Activated CD8-positive, alpha-beta T cell treated with anti-CD3 and anti-CD28 coated beads, Interleukin-2, amount 10 ng/mL, durations not matched to agents 7 days and 5 days (primary cell): ENCODE measurements at regions of chr6 and their contacts with region 1.

Region 1: GRCh38 chr6:158220786-158221442 is 52.8 kb downstream of the GTF2H5 start:
- DNase-seq: peak; percentile 82
- ATAC-seq: peak; percentile 94
- H3K4me3 Mint-ChIP-seq: no peak overlapping the region
- H3K27ac Mint-ChIP-seq: no peak overlapping the region
- H3K4me1 Mint-ChIP-seq: peaks cover 6% of the 10 kb centered on the region
- H3K27me3 Mint-ChIP-seq: no peaks in the 10 kb centered on the region

Region 2: GRCh38 chr6:158231551-158232315 is 10.8 kb after region 1 on chr6:
- CTCF ChIA-PET with region 1: interaction called, 14 read pairs
- POLR2A ChIA-PET with region 1: no interaction called
- DNase-seq: peak; percentile 76
- ATAC-seq: peak; percentile 86
- H3K4me3 Mint-ChIP-seq: peak overlapping the region; percentile 87
- H3K27ac Mint-ChIP-seq: peak overlapping the region; percentile 87
- H3K4me1 Mint-ChIP-seq: peaks cover 20% of the 10 kb centered on the region
- H3K27me3 Mint-ChIP-seq: peaks cover 5% of the 10 kb centered on the region

Region 3: DNA sequence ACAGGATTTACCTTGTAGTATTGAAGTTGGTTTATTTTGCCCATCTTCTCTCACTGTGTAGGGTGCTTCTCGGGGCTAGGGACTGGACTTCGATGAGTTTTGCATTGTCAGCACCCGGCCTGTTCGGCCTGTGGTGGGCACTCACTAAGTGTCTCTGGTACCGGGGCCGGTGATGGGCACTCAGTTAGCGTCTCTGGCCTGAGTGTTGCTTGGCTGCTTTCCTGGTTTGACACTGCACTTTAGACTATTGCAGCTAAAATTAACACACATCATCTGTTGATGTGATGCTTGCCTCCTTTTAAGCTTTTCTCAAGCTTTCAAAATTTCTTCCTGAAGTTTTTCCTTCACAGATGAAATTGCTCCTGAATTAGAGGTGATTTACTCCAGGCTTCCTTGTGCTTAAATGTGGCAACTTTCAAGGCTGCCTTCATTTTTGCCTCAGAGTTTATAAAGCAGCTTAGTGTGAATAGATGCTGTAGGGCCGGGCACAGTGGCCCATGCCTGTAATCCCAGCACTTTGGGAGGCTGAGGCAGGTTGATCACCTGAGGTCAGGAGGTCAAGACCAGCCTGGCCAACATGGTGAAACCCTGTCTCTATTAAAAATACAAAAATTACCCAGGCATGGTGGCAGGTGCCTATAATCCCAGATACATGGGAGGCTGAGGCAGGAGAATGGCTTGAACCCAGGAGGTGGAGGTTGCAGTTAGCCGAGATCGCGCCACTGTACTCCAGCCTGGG is 49.6 kb after region 1 on chr6:
- CTCF ChIA-PET with region 1: interaction called, 13 read pairs
- POLR2A ChIA-PET with region 1: no interaction called
- DNase-seq: no peak
- ATAC-seq: peak; percentile 6
- H3K4me3 Mint-ChIP-seq: peak overlapping the region; percentile 40
- H3K27ac Mint-ChIP-seq: peak overlapping the region; percentile 80
- H3K4me1 Mint-ChIP-seq: peaks cover 29% of the 10 kb centered on the region
- H3K27me3 Mint-ChIP-seq: no peaks in the 10 kb centered on the region

Region 4: DNA sequence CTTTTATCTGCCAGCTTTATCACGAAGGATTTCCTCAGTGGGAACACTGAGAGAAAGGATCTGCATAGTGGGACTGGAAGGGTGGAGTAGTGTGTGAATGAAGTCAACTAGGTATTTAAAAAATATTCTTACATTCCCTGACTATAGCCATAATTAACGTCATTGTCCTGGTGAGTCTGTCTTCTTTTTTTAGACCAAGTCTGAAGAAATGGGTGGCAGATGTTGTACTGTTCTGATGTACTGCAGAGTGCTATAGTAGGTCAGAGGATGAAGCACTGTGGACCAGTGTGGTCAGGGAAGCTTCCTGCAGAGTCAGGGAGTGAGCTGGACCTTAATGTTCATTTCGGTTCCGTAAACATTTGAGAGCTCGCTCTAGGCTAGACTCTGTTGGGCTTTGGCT is 103.2 kb after region 1 on chr6:
- CTCF ChIA-PET with region 1: no interaction called
- POLR2A ChIA-PET with region 1: no interaction called
- DNase-seq: no peak
- ATAC-seq: no peak
- H3K4me3 Mint-ChIP-seq: no peak overlapping the region
- H3K27ac Mint-ChIP-seq: no peak overlapping the region
- H3K4me1 Mint-ChIP-seq: peaks cover 31% of the 10 kb centered on the region
- H3K27me3 Mint-ChIP-seq: no peaks in the 10 kb centered on the region

Region 5: DNA sequence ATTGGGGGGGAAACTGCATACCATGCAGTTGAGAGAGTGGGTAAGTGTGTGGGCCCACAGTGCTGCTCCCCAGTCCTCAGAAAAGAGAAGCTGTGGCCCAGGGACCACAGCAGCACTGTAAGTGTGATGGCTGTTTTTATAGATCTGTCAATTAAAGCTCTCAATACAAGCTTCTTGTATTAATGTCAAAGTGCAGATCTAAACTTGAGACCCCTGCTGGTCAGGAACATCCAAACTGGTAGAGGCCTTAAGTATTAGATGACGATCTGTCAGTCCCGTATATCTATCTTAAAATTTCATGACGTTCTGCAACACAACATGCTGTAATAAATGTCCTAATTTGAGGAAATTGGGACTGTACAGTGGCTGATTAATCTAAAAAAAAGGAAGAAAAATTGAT is 166.1 kb after region 1 on chr6:
- CTCF ChIA-PET with region 1: interaction called, 15 read pairs
- POLR2A ChIA-PET with region 1: interaction called, 5 read pairs
- DNase-seq: peak; percentile 29
- ATAC-seq: peak; percentile 27
- H3K4me3 Mint-ChIP-seq: no peak overlapping the region
- H3K27ac Mint-ChIP-seq: no peak overlapping the region
- H3K4me1 Mint-ChIP-seq: no peaks in the 10 kb centered on the region
- H3K27me3 Mint-ChIP-seq: no peaks in the 10 kb centered on the region

Region 6: GRCh38 chr6:158518191-158519127 is 297.5 kb after region 1 on chr6:
- CTCF ChIA-PET with region 1: interaction called, 46 read pairs
- POLR2A ChIA-PET with region 1: no interaction called
- DNase-seq: peak; percentile 76
- ATAC-seq: peak; percentile 89
- H3K4me3 Mint-ChIP-seq: peak overlapping the region; percentile 80
- H3K27ac Mint-ChIP-seq: peak overlapping the region; percentile 80
- H3K4me1 Mint-ChIP-seq: peaks cover 48% of the 10 kb centered on the region
- H3K27me3 Mint-ChIP-seq: peaks cover 20% of the 10 kb centered on the region

Region 7: DNA sequence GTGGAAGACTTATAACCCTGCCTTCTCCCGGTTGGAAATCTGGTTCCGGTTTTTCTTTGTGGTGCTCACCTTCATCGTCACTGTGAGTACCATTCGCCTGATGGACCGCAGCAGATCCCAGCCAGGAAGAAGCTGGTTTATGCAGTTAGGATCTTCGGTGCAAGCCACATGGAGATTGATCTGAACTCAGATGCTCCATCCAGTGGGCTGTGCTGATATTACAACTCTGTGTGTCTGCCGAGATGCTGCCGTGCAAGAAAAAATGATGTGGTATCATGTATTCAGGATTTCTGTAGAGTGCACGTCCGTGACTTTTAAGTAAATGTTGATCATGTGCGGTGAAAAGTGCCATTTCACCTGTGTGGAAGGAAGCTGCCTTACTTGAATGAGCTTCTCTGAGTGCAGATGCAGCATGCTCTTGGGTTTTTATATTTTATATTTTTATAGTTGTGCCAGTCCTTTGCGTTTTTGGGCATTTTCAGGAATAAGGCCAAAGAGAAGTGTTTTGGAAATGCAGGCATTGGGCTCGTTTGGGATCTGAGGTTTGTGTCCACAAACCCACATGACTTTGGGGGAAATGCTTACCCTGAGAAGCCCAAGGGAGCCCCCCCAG is 384.5 kb after region 1 on chr6:
- CTCF ChIA-PET with region 1: interaction called, 29 read pairs
- POLR2A ChIA-PET with region 1: no interaction called
- DNase-seq: peak; percentile 68
- ATAC-seq: peak; percentile 51
- H3K4me3 Mint-ChIP-seq: no peak overlapping the region
- H3K27ac Mint-ChIP-seq: no peak overlapping the region
- H3K4me1 Mint-ChIP-seq: peaks cover 7% of the 10 kb centered on the region
- H3K27me3 Mint-ChIP-seq: no peaks in the 10 kb centered on the region